ENCODE measurements at regions of chr16 and their contacts with region 1.

Region 1: DNA sequence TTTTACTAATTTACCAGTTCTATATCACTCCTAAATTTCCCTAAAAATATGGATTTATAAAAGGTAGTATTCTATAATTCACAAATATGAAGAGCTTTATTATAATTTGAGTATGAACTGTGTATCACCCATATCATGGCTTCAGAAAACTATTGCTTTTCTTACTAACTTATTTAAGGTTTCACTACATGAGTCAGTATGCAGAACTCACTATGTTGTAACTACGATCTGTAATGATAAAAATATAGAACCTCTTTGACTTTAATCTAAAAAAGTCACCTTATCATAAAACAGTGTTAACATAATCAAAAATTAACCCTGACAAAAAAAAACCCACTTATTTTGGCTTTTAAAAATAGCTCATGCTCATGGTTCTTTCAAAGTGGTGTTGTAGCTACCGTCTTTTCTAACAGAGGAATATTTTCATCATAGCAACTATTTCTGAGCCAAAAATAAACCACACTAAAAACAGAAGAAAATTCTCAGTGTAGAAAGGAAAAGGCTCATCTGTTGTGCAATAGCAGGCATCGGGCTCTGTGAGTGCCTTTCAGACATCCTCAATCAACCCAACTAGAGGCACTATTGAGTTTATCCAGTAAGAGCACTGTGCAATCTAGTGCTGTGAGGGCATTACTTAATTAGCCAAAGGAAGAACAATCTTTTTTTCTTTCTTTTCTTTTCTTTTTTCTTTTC is 42.1 kb downstream of the ITGAM start:
- DNase-seq: no peak
- H3K4me3 Mint-ChIP-seq: no peak overlapping the region
- H3K27ac Mint-ChIP-seq: no peak overlapping the region
- H3K4me1 Mint-ChIP-seq: no peaks in the 10 kb centered on the region
- H3K27me3 Mint-ChIP-seq: peaks cover 23% of the 10 kb centered on the region
- CTCF ChIP-seq: no peak

Region 2: GRCh38 chr16:31052124-31052523 is 249.7 kb before region 1 on chr16:
- CTCF ChIA-PET with region 1: no interaction called
- intact Hi-C with region 1: no loop called
- DNase-seq: peak; percentile 40
- H3K4me3 Mint-ChIP-seq: no peak overlapping the region
- H3K27ac Mint-ChIP-seq: no peak overlapping the region
- H3K4me1 Mint-ChIP-seq: peaks cover 12% of the 10 kb centered on the region
- H3K27me3 Mint-ChIP-seq: no peaks in the 10 kb centered on the region
- CTCF ChIP-seq: no peak

Region 3: DNA sequence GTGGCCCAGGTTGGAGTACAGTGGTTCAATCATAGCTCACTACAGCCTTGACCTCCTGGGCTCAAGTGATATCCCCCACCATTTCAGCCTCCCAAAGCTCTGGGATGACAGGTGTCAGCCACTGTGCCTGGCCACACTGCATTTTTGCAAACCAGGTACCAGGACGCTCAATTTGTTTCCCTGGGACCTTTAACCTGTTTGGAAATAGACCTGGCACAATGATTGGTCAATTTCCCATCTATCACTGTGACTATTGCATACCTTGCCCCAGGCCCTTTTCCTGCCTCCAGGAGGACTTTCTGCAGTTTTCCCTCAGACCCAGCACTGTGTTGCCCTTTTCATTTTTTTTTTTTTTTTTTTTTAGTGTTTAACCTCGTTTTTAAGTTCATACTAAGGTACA is 133.0 kb before region 1 on chr16:
- CTCF ChIA-PET with region 1: no interaction called
- intact Hi-C with region 1: no loop called
- DNase-seq: no peak
- H3K4me3 Mint-ChIP-seq: no peak overlapping the region
- H3K27ac Mint-ChIP-seq: no peak overlapping the region
- H3K4me1 Mint-ChIP-seq: peaks cover 8% of the 10 kb centered on the region
- H3K27me3 Mint-ChIP-seq: no peaks in the 10 kb centered on the region
- CTCF ChIP-seq: no peak

Region 4: DNA sequence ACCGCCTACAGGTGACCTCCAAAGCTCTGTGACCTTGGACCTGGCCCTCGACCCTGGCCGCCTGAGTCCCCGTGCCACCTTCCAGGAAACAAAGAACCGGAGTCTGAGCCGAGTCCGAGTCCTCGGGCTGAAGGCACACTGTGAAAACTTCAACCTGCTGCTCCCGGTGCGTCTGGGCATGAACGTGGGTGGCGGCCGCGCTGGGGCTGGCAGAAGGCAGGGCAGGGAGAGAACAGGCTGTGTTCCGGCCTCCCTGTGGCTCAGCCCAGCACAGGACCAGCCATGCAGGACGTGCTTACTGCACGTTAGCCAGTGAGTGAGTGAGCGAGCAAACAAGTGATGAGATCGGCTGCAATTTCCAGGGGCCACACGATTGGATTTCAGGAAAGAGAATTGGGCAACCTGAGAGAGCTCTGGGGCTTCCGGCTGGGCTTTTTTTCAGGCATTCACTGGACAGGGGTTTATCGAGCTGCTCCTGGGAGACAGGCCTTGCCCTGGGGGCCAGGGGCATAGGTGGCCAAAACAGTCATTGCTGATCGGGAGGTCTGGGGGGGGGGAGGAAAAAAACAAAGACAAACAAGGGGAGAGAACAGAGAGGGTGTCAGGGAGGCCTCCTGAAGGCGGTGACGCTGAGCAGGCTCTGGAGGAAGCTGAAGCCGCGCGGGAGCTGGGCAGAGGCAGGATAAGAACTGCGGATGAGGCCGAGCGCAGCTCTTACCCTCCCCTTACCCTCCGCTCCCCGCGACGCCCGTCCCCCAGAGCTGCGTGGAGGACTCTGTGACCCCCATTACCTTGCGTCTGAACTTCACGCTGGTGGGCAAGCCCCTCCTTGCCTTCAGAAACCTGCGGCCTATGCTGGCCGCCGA is 70.0 kb after region 1 on chr16:
- CTCF ChIA-PET with region 1: no interaction called
- intact Hi-C with region 1: loop called (anchors 10 kb)
- DNase-seq: no peak
- H3K4me3 Mint-ChIP-seq: no peak overlapping the region
- H3K27ac Mint-ChIP-seq: no peak overlapping the region
- H3K4me1 Mint-ChIP-seq: no peaks in the 10 kb centered on the region
- H3K27me3 Mint-ChIP-seq: peaks cover 72% of the 10 kb centered on the region
- CTCF ChIP-seq: no peak